Natural killer cell (primary cell): ENCODE measurements at regions of chr2 and their contacts with region 1.

Region 1: DNA sequence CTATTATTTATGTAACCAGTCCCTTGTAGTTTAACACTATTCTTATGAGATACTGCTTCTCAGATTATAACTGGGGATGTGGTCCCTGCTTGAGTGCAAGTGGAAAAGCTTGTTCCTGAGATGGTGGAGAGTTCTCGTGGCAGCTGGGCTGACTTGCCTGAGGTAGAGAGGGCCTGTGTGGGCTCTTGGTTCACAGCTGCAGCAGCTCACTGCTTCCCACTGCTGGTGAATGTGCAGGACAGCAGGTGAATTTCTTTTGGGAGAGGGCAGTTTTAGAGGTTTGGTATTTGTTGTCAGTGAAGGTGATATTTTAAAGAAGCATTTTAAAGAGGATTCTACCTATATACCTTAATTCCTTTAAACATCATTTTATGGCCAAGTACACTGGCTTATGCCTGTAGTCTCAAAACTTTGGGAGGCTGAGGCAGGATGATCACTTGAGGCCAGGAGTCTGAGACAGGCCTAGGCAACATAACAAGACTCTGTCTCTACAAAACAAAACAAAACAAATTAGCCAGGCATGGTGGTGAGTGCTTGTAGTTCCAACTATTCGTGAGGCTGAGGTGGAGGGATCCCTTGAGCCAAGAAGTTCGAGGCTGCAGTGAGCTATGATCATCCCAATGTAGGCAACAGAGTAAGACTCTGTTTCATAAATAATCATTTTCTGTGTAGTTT is 94.8 kb downstream of the MTA3 start:
- DNase-seq: peak in 1 of 2 donors; percentile 86
- ATAC-seq: peak; percentile 82 to 92 (median 86)
- H3K4me3 ChIP-seq: no peak overlapping the region
- H3K4me3 Mint-ChIP-seq: no peak overlapping the region
- H3K27ac ChIP-seq: no peak overlapping the region
- H3K27ac Mint-ChIP-seq: peak overlapping the region; percentile 32 to 66
- H3K4me1 ChIP-seq: peaks cover 4% of the 10 kb centered on the region
- H3K4me1 Mint-ChIP-seq: peaks cover 5 to 11% of the 10 kb centered on the region in 2 donors
- H3K27me3 ChIP-seq: no peaks in the 10 kb centered on the region
- H3K27me3 Mint-ChIP-seq: no peaks in the 10 kb centered on the region
- CTCF ChIP-seq: peak; percentile 81

Region 2: GRCh38 chr2:42494355-42495233 is 168.6 kb before region 1 on chr2:
- intact Hi-C with region 1: loop called (anchors 1 kb)
- DNase-seq: peak; percentile 51 to 84
- ATAC-seq: peak; percentile 67 to 76 (median 68)
- H3K4me3 ChIP-seq: peak overlapping the region; percentile 29
- H3K4me3 Mint-ChIP-seq: peak overlapping the region; percentile 96
- H3K27ac ChIP-seq: no peak overlapping the region
- H3K27ac Mint-ChIP-seq: peak overlapping the region in 1 of 2 donors; percentile 41
- H3K4me1 ChIP-seq: peaks cover 14% of the 10 kb centered on the region
- H3K4me1 Mint-ChIP-seq: peaks cover 7 to 8% of the 10 kb centered on the region in 2 donors
- H3K27me3 ChIP-seq: peaks cover 21% of the 10 kb centered on the region
- H3K27me3 Mint-ChIP-seq: peaks cover 26 to 55% of the 10 kb centered on the region in 2 donors
- CTCF ChIP-seq: peak; percentile 92

Region 3: GRCh38 chr2:42513257-42513918 is 149.9 kb before region 1 on chr2:
- intact Hi-C with region 1: loop called (anchors 1 kb)
- DNase-seq: peak in 1 of 2 donors; percentile 55
- ATAC-seq: no peak
- H3K4me3 ChIP-seq: no peak overlapping the region
- H3K4me3 Mint-ChIP-seq: no peak overlapping the region
- H3K27ac ChIP-seq: no peak overlapping the region
- H3K27ac Mint-ChIP-seq: no peak overlapping the region
- H3K4me1 ChIP-seq: no peaks in the 10 kb centered on the region
- H3K4me1 Mint-ChIP-seq: no peaks in the 10 kb centered on the region
- H3K27me3 ChIP-seq: no peaks in the 10 kb centered on the region
- H3K27me3 Mint-ChIP-seq: peaks cover 6 to 19% of the 10 kb centered on the region in 2 donors
- CTCF ChIP-seq: peak; percentile 34

Region 4: DNA sequence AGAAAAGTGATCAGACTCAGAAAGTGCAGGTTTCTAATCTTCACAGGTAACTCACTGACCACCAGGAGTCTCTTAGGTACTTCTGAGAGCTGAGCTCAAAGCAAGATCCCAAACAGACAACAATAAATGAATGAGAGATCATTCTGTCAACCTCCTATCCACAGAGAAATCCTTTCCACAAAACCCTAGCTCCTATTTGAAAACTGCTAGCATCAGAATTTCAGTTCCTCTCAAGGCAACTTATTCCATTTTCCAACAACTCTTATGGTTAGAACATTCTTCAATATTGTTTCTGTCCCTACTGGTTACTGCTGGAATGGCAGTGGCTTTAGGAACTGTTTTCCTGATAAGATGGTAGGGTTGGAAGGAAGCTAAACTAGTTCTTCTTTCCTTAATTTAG is 149.8 kb after region 1 on chr2:
- intact Hi-C with region 1: no loop called
- DNase-seq: peak in 1 of 2 donors; percentile 36
- ATAC-seq: no peak
- H3K4me3 ChIP-seq: no peak overlapping the region
- H3K4me3 Mint-ChIP-seq: peak overlapping the region; percentile 37
- H3K27ac ChIP-seq: no peak overlapping the region
- H3K27ac Mint-ChIP-seq: peak overlapping the region; percentile 59 to 69
- H3K4me1 ChIP-seq: peaks cover 21% of the 10 kb centered on the region
- H3K4me1 Mint-ChIP-seq: peaks cover 28 to 30% of the 10 kb centered on the region in 2 donors
- H3K27me3 ChIP-seq: no peaks in the 10 kb centered on the region
- H3K27me3 Mint-ChIP-seq: peaks cover 0 to 5% of the 10 kb centered on the region in 2 donors
- CTCF ChIP-seq: no peak